ENCODE measurements at regions of chr10 and their contacts with region 1.

Region 1: GRCh38 chr10:29635711-29636144 is 957 bp upstream of the SVIL start:
- DNase-seq: peak; percentile 36
- H3K4me3 ChIP-seq: no peak overlapping the region
- H3K27ac ChIP-seq: peak overlapping the region; percentile 96
- H3K4me1 ChIP-seq: peaks cover 38% of the 10 kb centered on the region
- H3K27me3 ChIP-seq: no peaks in the 10 kb centered on the region
- CTCF ChIP-seq: no peak

Region 2: GRCh38 chr10:29598851-29599311 is 36.8 kb before region 1 on chr10:
- CTCF ChIA-PET with region 1: no interaction called
- dilution Hi-C with region 1: no loop called
- in situ Hi-C with region 1: no loop called
- intact Hi-C with region 1: loop called (anchors 2 kb)
- DNase-seq: peak; percentile 49
- H3K4me3 ChIP-seq: no peak overlapping the region
- H3K27ac ChIP-seq: peak overlapping the region; percentile 19
- H3K4me1 ChIP-seq: peaks cover 23% of the 10 kb centered on the region
- H3K27me3 ChIP-seq: no peaks in the 10 kb centered on the region
- CTCF ChIP-seq: no peak

Region 3: GRCh38 chr10:29646238-29646902 is 10.6 kb after region 1 on chr10:
- CTCF ChIA-PET with region 1: no interaction called
- dilution Hi-C with region 1: no loop called
- in situ Hi-C with region 1: no loop called
- intact Hi-C with region 1: loop called (anchors 1 kb)
- DNase-seq: peak; percentile 87
- H3K4me3 ChIP-seq: no peak overlapping the region
- H3K27ac ChIP-seq: peak overlapping the region; percentile 49
- H3K4me1 ChIP-seq: peaks cover 35% of the 10 kb centered on the region
- H3K27me3 ChIP-seq: no peaks in the 10 kb centered on the region
- CTCF ChIP-seq: no peak

Region 4: DNA sequence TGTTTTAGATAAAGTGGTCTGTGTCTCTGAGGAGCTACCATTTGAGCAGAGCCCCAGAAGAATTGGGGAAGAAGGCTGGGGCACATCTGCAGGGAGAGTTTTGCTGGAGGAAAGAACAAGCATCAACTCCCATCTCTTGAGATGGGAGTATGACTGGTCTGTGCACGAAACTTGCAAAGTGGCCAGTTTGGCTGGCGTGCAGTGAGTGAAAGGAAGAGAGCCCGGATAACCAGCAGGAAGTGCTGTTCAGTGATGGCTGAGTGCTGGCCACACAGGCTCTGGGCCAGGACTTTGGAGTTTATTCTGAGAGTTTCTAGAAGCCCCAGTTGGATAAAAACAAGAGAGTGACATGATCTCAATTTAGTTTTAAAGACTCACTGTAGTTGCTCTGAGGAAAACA is 33.4 kb after region 1 on chr10:
- CTCF ChIA-PET with region 1: no interaction called
- dilution Hi-C with region 1: no loop called
- in situ Hi-C with region 1: no loop called
- intact Hi-C with region 1: no loop called
- DNase-seq: peak; percentile 38
- H3K4me3 ChIP-seq: no peak overlapping the region
- H3K27ac ChIP-seq: peak overlapping the region; percentile 58
- H3K4me1 ChIP-seq: peaks cover 22% of the 10 kb centered on the region
- H3K27me3 ChIP-seq: no peaks in the 10 kb centered on the region
- CTCF ChIP-seq: no peak

Region 5: DNA sequence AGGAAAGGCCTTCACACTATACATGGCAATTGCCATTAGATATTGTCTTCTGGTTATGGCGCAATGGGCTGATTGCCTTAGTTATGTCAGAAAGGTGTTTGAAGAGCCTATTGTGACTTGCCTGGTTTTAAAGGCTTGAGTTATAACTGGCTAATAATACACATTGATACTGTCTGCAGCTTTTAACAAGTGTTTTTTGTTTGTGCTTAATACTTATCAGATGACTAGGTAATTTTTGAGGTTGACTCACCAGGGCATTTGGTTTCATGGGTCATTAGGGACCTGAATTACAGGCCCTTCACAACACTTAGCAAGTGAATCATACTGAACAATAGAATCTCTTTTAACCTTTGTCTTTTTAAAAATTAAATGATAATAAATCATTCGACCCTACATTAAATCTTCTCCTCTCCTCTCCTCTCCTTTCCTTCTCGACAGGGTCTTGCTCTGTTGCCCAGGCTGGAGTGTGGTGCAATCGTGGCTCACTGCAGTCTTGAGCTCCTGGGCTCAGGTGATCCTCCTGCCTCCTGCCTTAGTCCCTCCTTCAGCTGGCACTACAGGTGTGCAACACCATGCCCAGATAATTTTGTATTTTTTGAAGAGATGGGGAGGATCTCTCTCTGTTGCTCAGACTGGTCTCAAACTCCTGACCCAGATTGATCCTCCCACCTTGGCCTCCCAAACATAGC is 227.3 kb after region 1 on chr10:
- CTCF ChIA-PET with region 1: no interaction called
- dilution Hi-C with region 1: no loop called
- in situ Hi-C with region 1: no loop called
- intact Hi-C with region 1: no loop called
- DNase-seq: peak; percentile 97
- H3K4me3 ChIP-seq: no peak overlapping the region
- H3K27ac ChIP-seq: peak overlapping the region; percentile 70
- H3K4me1 ChIP-seq: peaks cover 52% of the 10 kb centered on the region
- H3K27me3 ChIP-seq: no peaks in the 10 kb centered on the region
- CTCF ChIP-seq: no peak